ENCODE measurements at regions of chr12 and their contacts with region 1.

Region 1: GRCh38 chr12:102702447-102703114 is 214.5 kb downstream of the PAH start:
- DNase-seq: peak; percentile 51 to 60
- H3K4me3 ChIP-seq: no peak overlapping the region
- H3K4me3 Mint-ChIP-seq: no peak overlapping the region
- H3K27ac Mint-ChIP-seq: no peak overlapping the region
- H3K4me1 ChIP-seq: no peaks in the 10 kb centered on the region
- H3K4me1 Mint-ChIP-seq: no peaks in the 10 kb centered on the region
- H3K27me3 ChIP-seq: no peaks in the 10 kb centered on the region
- H3K27me3 Mint-ChIP-seq: peaks cover 15% of the 10 kb centered on the region
- CTCF ChIP-seq: peak; percentile 66 to 72

Region 2: GRCh38 chr12:102539651-102540553 is 162.7 kb before region 1 on chr12:
- CTCF ChIA-PET with region 1: no interaction called
- POLR2A ChIA-PET with region 1: no interaction called
- intact Hi-C with region 1: loop called (anchors 5 kb)
- DNase-seq: peak; percentile 71 to 80
- H3K4me3 ChIP-seq: no peak overlapping the region
- H3K4me3 Mint-ChIP-seq: peak overlapping the region; percentile 62
- H3K27ac Mint-ChIP-seq: peak overlapping the region; percentile 84
- H3K4me1 ChIP-seq: peaks cover 22% of the 10 kb centered on the region
- H3K4me1 Mint-ChIP-seq: peaks cover 34% of the 10 kb centered on the region
- H3K27me3 ChIP-seq: no peaks in the 10 kb centered on the region
- H3K27me3 Mint-ChIP-seq: no peaks in the 10 kb centered on the region
- CTCF ChIP-seq: no peak

Region 3: GRCh38 chr12:102562836-102563425 is 139.7 kb before region 1 on chr12:
- CTCF ChIA-PET with region 1: no interaction called
- POLR2A ChIA-PET with region 1: no interaction called
- intact Hi-C with region 1: no loop called
- DNase-seq: no peak
- H3K4me3 ChIP-seq: no peak overlapping the region
- H3K4me3 Mint-ChIP-seq: no peak overlapping the region
- H3K27ac Mint-ChIP-seq: peak overlapping the region; percentile 81
- H3K4me1 ChIP-seq: peaks cover 49% of the 10 kb centered on the region
- H3K4me1 Mint-ChIP-seq: peaks cover 26% of the 10 kb centered on the region
- H3K27me3 ChIP-seq: no peaks in the 10 kb centered on the region
- H3K27me3 Mint-ChIP-seq: no peaks in the 10 kb centered on the region
- CTCF ChIP-seq: no peak

Measured in Caco-2 (cell line).